SK-N-SH (cell line): ENCODE measurements at regions of chr17 and their contacts with region 1.

Region 1: GRCh38 chr17:2796164-2797125 is at the start of gene RAP1GAP2:
- DNase-seq: no peak
- H3K4me3 ChIP-seq: no peak within 1 kb of the TSS
- H3K27ac ChIP-seq: no peak within 1 kb of the TSS; a peak in 1 of 4 replicates
- H3K4me1 ChIP-seq: peaks cover 0 to 18% of the 10 kb centered on the region in 2 experiments; a peak in 1 of 4 replicates
- H3K27me3 ChIP-seq: no peaks in the 10 kb centered on the region
- CTCF ChIP-seq: no peak
- EP300 ChIP-seq: no peak
- RAD21 ChIP-seq: no peak
- polyA plus RNA-seq, gene RAP1GAP2: 21.0 and 22.0 TPM in 2 replicates

Region 2: GRCh38 chr17:2786176-2786881 is 10.1 kb before region 1 on chr17:
- CTCF ChIA-PET with region 1: interaction called, 22 read pairs
- POLR2A ChIA-PET with region 1: interaction called, 6 read pairs
- DNase-seq: peak; percentile 96
- H3K4me3 ChIP-seq: peak overlapping the region in 1 of 2 experiments; percentile 23; a peak in 1 of 4 replicates
- H3K27ac ChIP-seq: no peak overlapping the region
- H3K4me1 ChIP-seq: peaks cover 0 to 12% of the 10 kb centered on the region in 2 experiments; a peak in 1 of 4 replicates
- H3K27me3 ChIP-seq: no peaks in the 10 kb centered on the region
- CTCF ChIP-seq: peak; percentile 91
- EP300 ChIP-seq: no peak
- RAD21 ChIP-seq: peak; percentile 79

Region 3: DNA sequence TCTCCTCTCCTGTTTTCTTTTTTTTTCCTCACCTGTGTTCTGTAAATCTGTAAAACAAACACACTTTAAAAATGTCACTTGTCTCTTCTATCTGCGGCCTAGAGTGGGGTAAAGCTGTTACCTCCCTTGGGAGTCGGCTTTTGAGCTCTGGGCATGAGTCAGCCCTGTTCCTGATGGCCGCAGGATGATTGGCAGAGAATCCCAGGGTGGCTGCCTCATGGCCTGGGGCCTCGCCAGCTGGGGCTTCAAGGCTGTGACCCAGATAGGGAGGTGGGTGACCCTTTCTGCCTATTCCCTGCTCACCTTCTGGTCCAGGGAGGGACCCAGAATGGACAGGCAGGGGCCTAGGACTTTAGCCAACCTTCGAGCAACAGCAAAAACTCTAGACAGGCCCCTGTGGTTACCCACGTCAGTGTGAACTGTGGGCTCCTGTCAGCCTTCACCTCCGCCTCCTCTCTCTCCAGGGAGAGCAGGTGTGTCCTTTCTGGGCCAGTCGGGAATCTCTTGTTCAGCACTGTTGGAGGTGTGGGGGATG is 87.2 kb after region 1 on chr17:
- CTCF ChIA-PET with region 1: no interaction called
- POLR2A ChIA-PET with region 1: no interaction called
- DNase-seq: peak; percentile 56
- H3K4me3 ChIP-seq: no peak overlapping the region
- H3K27ac ChIP-seq: peak overlapping the region; percentile 31 to 44
- H3K4me1 ChIP-seq: peaks cover 4 to 21% of the 10 kb centered on the region in 2 experiments; a peak in 1 of 4 replicates
- H3K27me3 ChIP-seq: no peaks in the 10 kb centered on the region
- CTCF ChIP-seq: no peak
- EP300 ChIP-seq: no peak
- RAD21 ChIP-seq: no peak